ENCODE measurements at regions of chr12 and their contacts with region 1.

Region 1: DNA sequence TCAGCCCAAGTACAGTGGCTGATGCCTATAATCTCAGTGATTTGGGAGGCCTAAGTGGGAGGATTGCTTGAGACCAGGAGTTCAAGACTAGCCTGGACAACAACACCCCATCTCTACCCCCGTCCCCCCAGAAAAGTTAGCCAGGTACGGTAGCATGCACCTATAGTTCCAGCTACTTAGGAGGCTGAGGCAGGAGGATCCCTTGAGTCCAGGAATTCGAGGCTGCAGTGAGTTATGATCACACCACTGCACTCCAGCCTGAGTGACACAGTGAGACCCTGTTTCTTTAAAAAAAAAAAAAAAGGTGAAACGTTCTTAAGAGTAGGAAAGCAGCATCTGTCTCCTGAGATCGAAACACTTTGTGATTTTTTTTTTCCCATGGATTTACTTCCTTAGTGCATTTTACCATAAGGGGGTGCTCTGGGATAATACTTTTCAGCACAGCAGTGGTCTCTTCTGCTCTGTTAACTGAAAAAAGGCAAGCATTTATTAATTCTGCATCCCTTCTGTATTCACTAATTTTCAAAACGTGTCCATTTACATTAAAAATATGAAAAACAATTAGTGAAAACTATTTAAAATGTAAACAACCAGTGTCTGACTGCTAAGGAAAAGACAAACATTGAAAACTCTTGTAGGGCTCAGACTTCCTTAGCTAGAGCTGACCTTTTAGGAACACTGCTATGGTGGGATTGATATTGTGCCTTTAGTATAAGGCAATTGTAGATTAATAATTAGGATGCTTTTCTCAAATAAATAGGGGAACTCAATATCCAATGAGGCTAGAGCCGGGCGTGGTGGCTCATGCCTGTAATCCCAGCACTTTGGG is 31.2 kb upstream of the USP44 start:
- DNase-seq: no peak
- H3K4me3 ChIP-seq: no peak overlapping the region
- H3K27ac ChIP-seq: no peak overlapping the region
- H3K27me3 ChIP-seq: no peaks in the 10 kb centered on the region
- CTCF ChIP-seq: peak; percentile 73

Region 2: DNA sequence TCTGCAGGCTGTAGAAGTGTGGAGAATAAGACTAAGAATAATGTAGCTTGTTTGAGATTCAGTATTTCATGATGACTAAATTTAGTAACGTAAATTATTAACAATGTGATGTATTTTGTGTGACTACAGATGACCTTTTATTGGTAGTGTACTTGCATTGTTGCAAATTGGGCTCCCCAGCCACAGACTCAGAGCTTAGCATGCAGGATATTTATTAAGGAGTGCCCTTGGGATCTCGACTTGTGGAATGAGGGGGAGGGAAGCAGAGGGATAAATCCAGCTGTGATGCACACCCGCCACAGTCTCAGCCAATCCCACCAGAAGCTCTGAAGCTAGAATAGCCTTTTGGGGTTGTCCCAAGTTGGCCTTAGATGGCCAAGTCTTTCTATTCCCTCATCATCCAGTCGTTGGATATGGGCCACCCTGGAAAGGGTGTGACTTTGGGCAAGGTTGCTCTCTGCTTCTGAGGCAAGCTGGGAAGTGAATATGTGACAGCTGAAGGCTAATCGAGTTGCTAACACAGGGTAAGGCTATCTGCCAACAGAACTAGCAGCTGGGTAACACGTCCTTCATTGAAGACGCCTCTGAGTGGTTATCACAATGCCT is 10.9 kb after region 1 on chr12:
- CTCF ChIA-PET with region 1: interaction called, 10 read pairs
- POLR2A ChIA-PET with region 1: no interaction called
- DNase-seq: no peak
- H3K4me3 ChIP-seq: no peak overlapping the region
- H3K27ac ChIP-seq: no peak overlapping the region
- H3K27me3 ChIP-seq: no peaks in the 10 kb centered on the region
- CTCF ChIP-seq: no peak

Region 3: GRCh38 chr12:95809000-95809680 is 226.7 kb after region 1 on chr12:
- CTCF ChIA-PET with region 1: interaction called, 80 read pairs
- POLR2A ChIA-PET with region 1: no interaction called
- DNase-seq: no peak
- H3K4me3 ChIP-seq: no peak overlapping the region
- H3K27ac ChIP-seq: no peak overlapping the region
- H3K27me3 ChIP-seq: no peaks in the 10 kb centered on the region
- CTCF ChIP-seq: no peak

Region 4: GRCh38 chr12:95815635-95816212 is 233.3 kb after region 1 on chr12:
- CTCF ChIA-PET with region 1: interaction called, 80 read pairs
- POLR2A ChIA-PET with region 1: no interaction called
- DNase-seq: no peak
- H3K4me3 ChIP-seq: no peak overlapping the region
- H3K27ac ChIP-seq: no peak overlapping the region
- H3K27me3 ChIP-seq: no peaks in the 10 kb centered on the region
- CTCF ChIP-seq: peak; percentile 76

Region 5: GRCh38 chr12:95848575-95849388 is 266.3 kb after region 1 on chr12:
- CTCF ChIA-PET with region 1: interaction called, 25 read pairs
- POLR2A ChIA-PET with region 1: no interaction called
- DNase-seq: no peak
- H3K4me3 ChIP-seq: no peak overlapping the region
- H3K27ac ChIP-seq: no peak overlapping the region
- H3K27me3 ChIP-seq: peaks cover 9% of the 10 kb centered on the region
- CTCF ChIP-seq: peak; percentile 44

Region 6: GRCh38 chr12:95998611-95999286 is 416.3 kb after region 1 on chr12:
- CTCF ChIA-PET with region 1: interaction called, 12 read pairs
- POLR2A ChIA-PET with region 1: no interaction called
- DNase-seq: peak; percentile 10
- H3K4me3 ChIP-seq: no peak overlapping the region
- H3K27ac ChIP-seq: no peak overlapping the region
- H3K27me3 ChIP-seq: peaks cover 2% of the 10 kb centered on the region
- CTCF ChIP-seq: peak; percentile 65

Measured in AG04450 (cell line).